Activated CD8-positive, alpha-beta memory T cell treated with anti-CD3 and anti-CD28 coated beads, Interleukin-2, amount 10 ng/mL, durations not matched to agents 7 days and 5 days (primary cell): ENCODE measurements at regions of chr11 and their contacts with region 1.

Region 1: GRCh38 chr11:63916837-63917691 is at the start of gene RCOR2:
- DNase-seq: peak; percentile 67
- ATAC-seq: peak; percentile 77
- H3K4me3 Mint-ChIP-seq: peak within 1 kb of the TSS; percentile 56
- H3K27ac Mint-ChIP-seq: no peak within 1 kb of the TSS
- H3K4me1 Mint-ChIP-seq: peaks cover 10% of the 10 kb centered on the region
- H3K27me3 Mint-ChIP-seq: peaks cover 11% of the 10 kb centered on the region
- total RNA-seq, gene RCOR2: 0.16 to 0.47 TPM

Region 2: GRCh38 chr11:63933459-63933858 is 16.4 kb after region 1 on chr11:
- CTCF ChIA-PET with region 1: interaction called, 10 read pairs
- DNase-seq: no peak
- ATAC-seq: no peak
- H3K4me3 Mint-ChIP-seq: no peak overlapping the region
- H3K27ac Mint-ChIP-seq: no peak overlapping the region
- H3K4me1 Mint-ChIP-seq: peaks cover 9% of the 10 kb centered on the region
- H3K27me3 Mint-ChIP-seq: peaks cover 3% of the 10 kb centered on the region

Region 3: GRCh38 chr11:63961608-63962412 is 44.7 kb after region 1 on chr11:
- CTCF ChIA-PET with region 1: no interaction called
- DNase-seq: peak; percentile 83
- ATAC-seq: peak; percentile 77
- H3K4me3 Mint-ChIP-seq: peak overlapping the region; percentile 3
- H3K27ac Mint-ChIP-seq: peak overlapping the region; percentile 38
- H3K4me1 Mint-ChIP-seq: peaks cover 32% of the 10 kb centered on the region
- H3K27me3 Mint-ChIP-seq: no peaks in the 10 kb centered on the region

Region 4: GRCh38 chr11:64028398-64029115 is 111.5 kb after region 1 on chr11:
- CTCF ChIA-PET with region 1: no interaction called
- DNase-seq: no peak
- ATAC-seq: no peak
- H3K4me3 Mint-ChIP-seq: no peak overlapping the region
- H3K27ac Mint-ChIP-seq: no peak overlapping the region
- H3K4me1 Mint-ChIP-seq: no peaks in the 10 kb centered on the region
- H3K27me3 Mint-ChIP-seq: peaks cover 17% of the 10 kb centered on the region